ENCODE measurements at regions of chr4 and their contacts with region 1.

Region 1: DNA sequence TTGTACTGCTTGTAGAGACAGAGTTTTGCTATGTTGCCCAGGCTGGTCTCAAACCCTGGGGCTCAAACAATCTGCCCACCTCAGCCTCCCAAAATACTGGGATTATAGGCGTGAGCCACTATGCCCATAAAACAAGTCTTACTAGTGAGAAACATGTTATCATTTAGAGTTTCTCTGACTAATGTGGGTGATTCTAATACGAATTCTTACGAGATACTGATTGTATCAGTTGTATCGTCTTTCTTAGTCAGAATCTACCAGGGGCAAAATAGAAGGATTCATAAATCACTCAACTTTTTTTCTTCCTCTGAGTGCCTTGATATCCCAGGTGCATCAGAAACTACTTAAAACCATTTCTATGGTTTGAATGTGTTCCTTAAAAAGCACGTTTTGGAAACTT is 14.4 kb upstream of the NMU start:
- DNase-seq: no peak
- ATAC-seq: no peak
- H3K4me3 ChIP-seq: no peak overlapping the region
- H3K27ac ChIP-seq: no peak overlapping the region
- H3K4me1 ChIP-seq: no peaks in the 10 kb centered on the region
- H3K27me3 ChIP-seq: peaks cover 0 to 13% (median 0%) of the 10 kb centered on the region in 7 donors
- CTCF ChIP-seq: no peak

Region 2: DNA sequence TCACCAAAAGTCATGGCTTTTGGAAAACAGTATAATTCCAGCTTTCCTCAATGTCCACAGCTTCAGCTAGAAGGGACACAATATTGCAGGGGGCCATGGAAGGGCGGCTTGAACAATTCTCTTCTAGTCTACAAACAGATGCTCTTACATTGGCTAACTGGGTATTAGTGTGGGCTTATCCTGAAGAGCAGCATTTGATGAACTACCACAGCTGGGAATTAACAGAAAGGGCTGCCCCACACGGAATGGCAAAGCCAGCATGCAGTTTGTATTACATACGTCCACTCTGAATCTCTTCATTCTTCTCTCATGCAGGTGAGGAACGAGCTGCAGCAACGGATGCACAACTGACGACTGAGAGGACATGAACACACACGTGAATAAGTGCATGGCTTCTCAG is 45.5 kb before region 1 on chr4:
- intact Hi-C with region 1: no loop called
- DNase-seq: no peak
- ATAC-seq: no peak
- H3K4me3 ChIP-seq: no peak overlapping the region
- H3K27ac ChIP-seq: no peak overlapping the region
- H3K4me1 ChIP-seq: no peaks in the 10 kb centered on the region
- H3K27me3 ChIP-seq: no peaks in the 10 kb centered on the region
- CTCF ChIP-seq: no peak

Region 3: DNA sequence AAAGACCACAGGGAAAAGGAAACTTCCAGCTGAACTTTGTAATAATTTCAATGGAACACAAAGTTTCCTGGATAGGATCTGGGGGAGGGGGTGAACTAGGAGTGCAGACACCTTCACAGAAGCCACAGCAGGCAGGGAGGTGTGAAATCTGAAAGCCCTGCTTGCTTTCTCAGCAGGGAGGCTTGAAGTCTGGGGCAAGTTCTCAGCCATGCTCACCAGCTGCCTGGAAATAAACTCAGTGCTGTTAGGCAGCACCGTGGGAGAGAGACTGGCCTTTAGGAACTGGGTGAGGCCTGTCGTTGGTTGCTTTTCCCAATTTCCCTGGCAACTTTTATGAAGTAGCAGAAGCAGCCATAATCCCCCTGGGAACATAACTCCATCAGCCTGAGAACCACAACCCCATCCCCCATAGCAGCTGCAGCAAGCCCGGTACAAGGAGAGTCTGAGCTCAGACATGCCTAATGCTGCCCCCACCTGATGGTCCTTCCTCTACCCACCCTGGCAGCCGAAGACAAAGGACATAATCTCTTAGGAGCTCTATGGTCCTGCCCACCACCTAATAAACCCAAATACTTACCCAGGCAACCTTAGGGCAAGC is 24.8 kb after region 1 on chr4:
- intact Hi-C with region 1: loop called in 1 of 10 experiments (anchors 1 kb)
- DNase-seq: no peak
- ATAC-seq: no peak
- H3K4me3 ChIP-seq: no peak overlapping the region
- H3K27ac ChIP-seq: no peak overlapping the region
- H3K4me1 ChIP-seq: no peaks in the 10 kb centered on the region
- H3K27me3 ChIP-seq: peaks cover 0 to 13% (median 2%) of the 10 kb centered on the region in 7 donors
- CTCF ChIP-seq: no peak

Region 4: GRCh38 chr4:56026596-56026995 is 376.1 kb after region 1 on chr4:
- intact Hi-C with region 1: no loop called
- DNase-seq: no peak
- ATAC-seq: no peak
- H3K4me3 ChIP-seq: no peak overlapping the region
- H3K27ac ChIP-seq: no peak overlapping the region
- H3K4me1 ChIP-seq: no peaks in the 10 kb centered on the region
- H3K27me3 ChIP-seq: no peaks in the 10 kb centered on the region
- CTCF ChIP-seq: no peak

Measured in heart right ventricle (tissue), 16 donors.